Activated T-helper 1 cell treated with anti-CD3 and anti-CD28 coated beads, Interleukin-12 subunit alpha, Interleukin-12 subunit beta, Interleukin-2, Interleukin-4 antibody, amounts not matched to agents 30 ng/mL and 10 ng/mL and 1 ng/mL, durations not matched to agents 14 hours and 24 hours and 36 hours (primary cell): ENCODE measurements at regions of chr22 and their contacts with region 1.

Region 1: DNA sequence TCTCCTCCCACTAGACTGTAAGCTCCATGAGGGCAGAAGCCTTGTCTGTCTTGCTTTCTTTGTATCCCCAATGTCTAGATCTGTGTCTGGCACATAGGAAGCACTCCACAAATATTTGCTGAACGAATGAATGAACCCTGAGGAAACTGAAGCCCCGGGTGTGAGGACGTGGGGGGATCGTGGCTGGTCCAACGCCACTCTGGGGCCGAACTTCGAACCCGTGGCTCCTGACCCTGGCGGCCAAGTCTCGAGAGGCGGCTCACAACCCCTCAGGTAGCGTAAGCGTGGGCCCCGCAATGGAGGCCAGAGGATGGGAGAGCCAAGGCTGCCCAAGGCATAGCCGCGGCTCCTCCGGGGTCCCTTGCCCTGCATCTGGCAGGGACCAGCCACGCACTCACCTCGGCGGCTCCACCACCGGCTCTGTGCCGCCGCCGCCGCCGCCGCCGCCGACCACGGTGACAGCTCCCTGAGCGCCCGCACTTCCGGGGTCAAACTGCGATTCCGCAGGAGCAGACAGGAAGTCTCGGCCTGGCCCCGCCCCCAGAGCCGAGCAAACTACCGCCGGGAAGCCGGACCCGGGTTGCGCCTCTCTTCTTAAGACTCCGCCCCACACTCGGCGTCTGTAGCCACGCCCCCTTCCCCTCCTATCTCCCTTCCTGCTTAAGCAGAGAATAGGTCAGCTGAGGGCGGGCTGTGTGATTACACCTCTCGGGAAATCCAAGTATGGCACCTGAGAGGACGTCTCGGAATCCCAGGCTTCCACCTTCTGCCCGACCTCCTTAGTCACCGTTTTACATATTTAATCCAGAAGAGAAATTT is at the start of gene ASCC2:
- DNase-seq: peak; percentile 99
- H3K4me3 Mint-ChIP-seq: peak within 1 kb of the TSS; percentile 89
- H3K27ac Mint-ChIP-seq: peak within 1 kb of the TSS; percentile 86
- H3K4me1 Mint-ChIP-seq: peaks cover 33% of the 10 kb centered on the region
- H3K27me3 Mint-ChIP-seq: peaks cover 5% of the 10 kb centered on the region
- total RNA-seq, gene ASCC2: 84.5 and 90.9 TPM in 2 replicates

Region 2: GRCh38 chr22:29603358-29604075 is 234.5 kb before region 1 on chr22 and contains the start of gene NF2:
- intact Hi-C with region 1: loop called (anchors 2 kb)
- DNase-seq: peak; percentile 99
- H3K4me3 Mint-ChIP-seq: peak within 1 kb of the TSS; percentile 96
- H3K27ac Mint-ChIP-seq: peak within 1 kb of the TSS; percentile 98
- H3K4me1 Mint-ChIP-seq: peaks cover 23% of the 10 kb centered on the region
- H3K27me3 Mint-ChIP-seq: no peaks in the 10 kb centered on the region
- total RNA-seq, gene NF2: 65.7 and 66.1 TPM in 2 replicates

Region 3: DNA sequence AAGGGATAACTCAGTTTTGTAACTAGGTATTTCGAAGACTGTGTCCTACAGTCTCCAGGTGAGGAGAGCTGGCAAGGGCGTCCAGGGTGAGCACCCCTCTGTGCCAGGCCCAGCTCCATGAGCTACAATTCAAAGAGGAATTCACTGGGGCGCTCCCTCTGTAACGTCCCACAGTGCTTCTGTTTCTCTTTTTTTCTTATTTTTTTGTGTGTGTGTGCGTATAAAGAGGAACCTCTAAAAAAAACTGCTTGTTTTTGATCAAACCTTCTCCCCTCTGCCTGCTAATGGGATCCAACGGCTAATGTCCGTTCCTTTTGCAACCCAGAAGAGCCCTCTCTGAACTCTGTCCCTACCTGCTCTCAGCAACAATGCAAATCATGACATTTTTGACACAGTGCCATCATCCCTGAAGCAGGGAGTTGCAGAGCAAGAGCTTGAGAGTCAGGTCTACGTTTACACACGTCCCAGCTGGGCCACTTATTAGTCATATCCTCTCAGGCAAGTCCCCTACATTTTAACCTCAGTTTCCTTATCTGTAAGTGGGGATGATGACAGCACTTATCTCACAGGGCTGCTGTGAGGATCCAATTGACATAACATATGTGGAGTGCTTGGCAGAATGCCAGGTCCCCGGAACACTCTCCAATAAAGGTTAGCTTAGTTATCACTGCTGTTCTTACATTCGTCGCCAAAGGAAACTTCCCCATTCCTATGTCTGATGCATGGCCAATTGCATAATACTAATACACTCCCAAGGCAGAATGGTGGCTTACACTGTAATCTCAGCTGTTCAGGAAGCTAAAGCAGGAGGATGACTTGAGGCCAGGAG is 16.8 kb before region 1 on chr22:
- intact Hi-C with region 1: loop called (anchors 1 kb)
- DNase-seq: peak; percentile 37
- H3K4me3 Mint-ChIP-seq: no peak overlapping the region
- H3K27ac Mint-ChIP-seq: peak overlapping the region; percentile 81
- H3K4me1 Mint-ChIP-seq: peaks cover 15% of the 10 kb centered on the region
- H3K27me3 Mint-ChIP-seq: no peaks in the 10 kb centered on the region

Region 4: GRCh38 chr22:29883045-29883774 is 45.2 kb after region 1 on chr22 and contains the start of gene MTMR3:
- intact Hi-C with region 1: loop called (anchors 1 kb)
- DNase-seq: peak; percentile 94
- H3K4me3 Mint-ChIP-seq: peak within 1 kb of the TSS; percentile 82
- H3K27ac Mint-ChIP-seq: peak within 1 kb of the TSS; percentile 48
- H3K4me1 Mint-ChIP-seq: peaks cover 7% of the 10 kb centered on the region
- H3K27me3 Mint-ChIP-seq: peaks cover 5% of the 10 kb centered on the region
- total RNA-seq, gene MTMR3: 20.6 and 27.8 TPM in 2 replicates

Region 5: DNA sequence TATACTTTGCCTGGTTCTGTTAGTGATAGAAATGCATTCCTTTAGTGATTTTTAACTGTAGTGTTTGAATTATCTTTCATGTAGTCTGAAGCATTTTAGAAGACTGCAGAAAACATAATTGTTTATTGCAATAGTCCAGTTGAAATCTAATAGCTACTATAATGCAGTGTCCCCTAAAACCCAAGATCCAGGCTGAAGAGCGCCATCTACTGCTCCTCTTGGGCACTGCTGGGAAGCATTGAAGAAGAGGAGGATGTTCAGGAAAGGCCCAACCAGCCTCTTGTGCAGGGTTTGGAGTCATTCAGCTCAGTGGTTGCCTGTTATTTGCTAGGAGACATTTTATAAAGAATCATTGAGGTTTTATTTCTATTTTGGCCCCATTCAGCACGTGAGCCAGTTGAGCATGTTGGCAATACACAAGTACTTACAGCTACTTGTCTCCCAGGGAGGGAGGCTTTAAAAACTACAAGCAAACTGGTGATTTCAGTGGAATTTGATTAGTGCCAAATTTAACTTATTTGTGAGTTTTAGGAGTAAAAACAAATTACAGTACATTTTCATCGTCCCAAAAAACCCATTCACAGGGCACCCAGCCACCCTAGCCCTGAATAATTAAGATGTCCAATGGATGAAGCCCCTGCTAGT is 167.3 kb after region 1 on chr22:
- intact Hi-C with region 1: loop called (anchors 1 kb)
- DNase-seq: peak; percentile 41
- H3K4me3 Mint-ChIP-seq: no peak overlapping the region
- H3K27ac Mint-ChIP-seq: no peak overlapping the region
- H3K4me1 Mint-ChIP-seq: peaks cover 17% of the 10 kb centered on the region
- H3K27me3 Mint-ChIP-seq: no peaks in the 10 kb centered on the region

Region 6: DNA sequence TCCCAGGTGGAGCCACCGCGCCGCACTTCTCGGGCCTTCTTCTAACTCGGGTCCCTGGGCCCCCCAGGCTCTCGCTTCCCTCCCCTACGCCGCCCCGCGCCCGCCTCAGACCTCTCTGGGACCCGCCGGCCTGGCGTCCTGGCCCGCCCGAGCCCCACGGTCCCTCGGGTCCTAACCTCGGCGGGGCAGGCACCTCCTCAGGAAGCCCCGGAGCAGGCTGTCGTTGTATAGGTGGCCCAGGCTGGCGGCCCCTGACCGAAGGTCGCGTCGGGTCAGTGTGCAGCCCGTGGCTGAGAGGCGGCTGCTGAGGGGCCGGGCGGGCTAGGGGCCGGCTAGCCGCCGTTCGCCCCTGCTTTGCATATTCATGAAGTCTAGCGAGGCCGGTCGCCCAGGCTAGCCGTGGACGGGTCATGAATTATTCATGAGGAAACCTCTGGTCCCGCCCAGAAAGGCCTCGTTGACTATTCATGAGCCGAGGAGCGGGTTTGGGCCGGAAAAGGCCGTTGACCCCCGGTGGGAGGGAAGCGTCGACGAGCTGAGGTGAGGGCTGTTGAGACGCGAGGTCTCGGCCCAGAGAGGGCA is 242.1 kb after region 1 on chr22 and contains the start of gene HORMAD2:
- intact Hi-C with region 1: loop called (anchors 2 kb)
- DNase-seq: no peak
- H3K4me3 Mint-ChIP-seq: no peak within 1 kb of the TSS
- H3K27ac Mint-ChIP-seq: no peak within 1 kb of the TSS
- H3K4me1 Mint-ChIP-seq: peaks cover 23% of the 10 kb centered on the region
- H3K27me3 Mint-ChIP-seq: peaks cover 7% of the 10 kb centered on the region
- total RNA-seq, gene HORMAD2: 0.21 TPM in 1 of 2 replicates, not detected in the other

Region 7: DNA sequence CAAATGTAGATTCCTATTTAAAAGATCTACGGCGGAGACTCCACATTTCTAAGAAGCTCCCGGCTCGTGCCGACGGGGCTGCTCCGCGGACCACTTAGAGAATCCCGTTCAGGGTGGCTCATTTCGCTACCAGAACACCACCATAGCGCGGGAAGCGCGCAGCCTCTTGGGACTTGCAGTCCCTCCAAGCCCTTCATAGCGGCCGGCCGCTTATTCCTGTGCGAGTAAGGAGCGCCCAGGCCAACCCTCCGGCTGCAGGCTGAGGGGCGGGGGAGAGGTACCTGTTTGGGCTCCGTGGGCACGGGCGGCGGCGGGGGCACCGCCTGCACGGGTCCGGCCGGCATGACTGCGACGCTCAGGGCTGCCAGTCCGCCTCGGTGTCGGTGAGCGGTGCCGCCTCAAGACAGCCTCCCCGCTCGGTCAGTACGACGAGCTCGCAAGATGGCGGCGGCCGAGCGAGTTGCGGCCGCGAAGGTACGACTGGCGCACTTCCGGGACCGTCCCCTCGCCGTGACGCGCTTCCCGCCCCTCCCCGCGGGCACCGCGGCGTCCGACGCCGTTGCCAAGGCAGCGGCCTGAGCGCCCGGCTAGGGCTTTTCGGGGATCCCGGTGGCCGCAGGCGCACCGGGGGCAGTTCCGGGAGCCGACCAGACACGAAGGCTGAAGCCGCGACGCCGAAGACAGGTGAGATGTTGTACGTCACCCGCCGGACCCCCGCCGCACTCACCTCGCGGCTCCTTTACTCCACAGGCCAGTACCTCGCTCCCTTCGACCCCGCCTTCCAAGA is 518.7 kb after region 1 on chr22 and contains the starts of genes CCDC157 and SF3A1:
- intact Hi-C with region 1: loop called (anchors 1 kb)
- DNase-seq: peak; percentile 88
- H3K4me3 Mint-ChIP-seq: peak within 1 kb of the TSS; percentile 94
- H3K27ac Mint-ChIP-seq: peak within 1 kb of the TSS; percentile 90
- H3K4me1 Mint-ChIP-seq: peaks cover 43% of the 10 kb centered on the region
- H3K27me3 Mint-ChIP-seq: peaks cover 8% of the 10 kb centered on the region
- total RNA-seq, gene CCDC157: 2.4 and 3.0 TPM in 2 replicates
- total RNA-seq, gene SF3A1: 308 and 310 TPM in 2 replicates